HepG2 (cell line): ENCODE measurements at regions of chr1 and their contacts with region 1.

Region 1: GRCh38 chr1:17587989-17588685 is 48.6 kb downstream of the ARHGEF10L start:
- DNase-seq: peak; percentile 96
- ATAC-seq: peak; percentile 85
- H3K4me3 ChIP-seq: peak overlapping the region in 2 of 3 experiments; percentile 28 to 48; a peak in 4 of 6 replicates
- H3K27ac ChIP-seq: peak overlapping the region; percentile 97
- H3K4me1 ChIP-seq: peaks cover 100% of the 10 kb centered on the region
- H3K27me3 ChIP-seq: no peaks in the 10 kb centered on the region
- CTCF ChIP-seq: 0 out of 2 replicates have a peak, but pooled peaks have one; percentile 18
- EP300 ChIP-seq: peak in 1 of 2 experiments; percentile 80; a peak in 2 of 4 replicates
- POLR2A ChIP-seq: peak in 1 of 2 experiments; percentile 62; a peak in 3 of 4 replicates
- RAD21 ChIP-seq: peak; percentile 21; the same call in 1 of the 2 replicates

Region 2: GRCh38 chr1:17201201-17202021 is 386.7 kb before region 1 on chr1:
- CTCF ChIA-PET with region 1: no interaction called
- POLR2A ChIA-PET with region 1: no interaction called
- in situ Hi-C with region 1: no loop called
- intact Hi-C with region 1: no loop called
- DNase-seq: no peak
- ATAC-seq: no peak
- H3K4me3 ChIP-seq: no peak overlapping the region
- H3K27ac ChIP-seq: no peak overlapping the region
- H3K4me1 ChIP-seq: 0 out of 2 replicates have a peak, but pooled peaks cover 10% of the 10 kb centered on the region
- H3K27me3 ChIP-seq: peaks cover 0 to 5% of the 10 kb centered on the region in 2 experiments; a peak in 2 of 5 replicates
- CTCF ChIP-seq: no peak
- EP300 ChIP-seq: no peak
- POLR2A ChIP-seq: no peak
- RAD21 ChIP-seq: no peak

Region 3: DNA sequence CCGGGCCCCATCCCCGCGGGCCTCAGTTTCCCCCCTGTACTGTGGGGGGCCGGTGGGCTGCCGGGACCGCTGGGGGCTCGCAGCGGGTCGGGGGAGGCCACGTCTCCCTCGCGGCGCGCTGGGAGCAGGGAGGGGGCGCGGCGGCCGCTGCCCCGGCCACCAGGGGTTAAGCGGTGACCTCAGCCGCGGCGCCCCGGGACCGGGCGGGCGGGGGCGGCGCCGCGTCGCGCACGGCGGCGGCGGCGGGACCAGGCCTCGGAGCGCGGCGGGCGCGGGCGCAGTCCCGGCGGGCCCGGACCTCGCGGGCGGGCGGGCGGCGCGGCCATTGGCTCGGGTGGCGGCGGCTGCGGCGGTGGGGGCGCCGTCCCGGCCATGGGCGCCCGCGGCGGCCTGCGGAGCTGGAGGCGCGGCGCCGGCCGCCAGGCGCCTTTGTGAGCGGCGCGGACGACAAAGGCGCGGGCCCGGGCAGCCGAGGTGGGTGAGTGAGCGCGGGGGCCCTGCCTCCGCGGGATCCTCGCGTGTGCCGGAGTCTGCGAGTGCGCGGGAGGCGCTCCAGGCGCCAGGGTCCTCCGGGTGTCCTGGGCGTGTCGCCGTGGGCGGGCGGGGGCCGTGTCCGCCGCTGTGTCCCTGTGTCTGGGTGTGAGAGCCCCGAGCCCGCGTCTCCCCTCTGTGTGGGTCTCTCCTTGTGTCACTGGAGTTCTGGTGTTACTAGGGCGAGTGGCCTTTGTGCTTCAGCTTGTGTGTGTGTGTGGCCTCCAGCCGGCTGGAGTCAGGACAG is 48.5 kb before region 1 on chr1 and contains the start of gene ARHGEF10L:
- CTCF ChIA-PET with region 1: no interaction called
- POLR2A ChIA-PET with region 1: interaction called, 10 read pairs
- in situ Hi-C with region 1: no loop called
- intact Hi-C with region 1: loop called (anchors 2 kb)
- DNase-seq: no peak
- ATAC-seq: peak; percentile 42
- H3K4me3 ChIP-seq: peak within 1 kb of the TSS; percentile 75 to 86 (median 85)
- H3K27ac ChIP-seq: no peak within 1 kb of the TSS
- H3K4me1 ChIP-seq: peaks cover 49% of the 10 kb centered on the region
- H3K27me3 ChIP-seq: peaks cover 1 to 15% of the 10 kb centered on the region in 2 experiments; a peak in 2 of 5 replicates
- CTCF ChIP-seq: no peak
- EP300 ChIP-seq: no peak
- POLR2A ChIP-seq: no peak
- RAD21 ChIP-seq: no peak
- total RNA-seq, gene ARHGEF10L: 26.2 and 46.5 TPM in 2 replicates

Region 4: GRCh38 chr1:17574516-17574915 is 13.6 kb before region 1 on chr1:
- CTCF ChIA-PET with region 1: no interaction called
- POLR2A ChIA-PET with region 1: interaction called, 53 read pairs
- in situ Hi-C with region 1: no loop called
- intact Hi-C with region 1: loop called (anchors 1 kb)
- DNase-seq: no peak
- ATAC-seq: peak; percentile 59
- H3K4me3 ChIP-seq: peak overlapping the region in 1 of 3 experiments; percentile 44; a peak in 1 of 6 replicates
- H3K27ac ChIP-seq: no peak overlapping the region
- H3K4me1 ChIP-seq: peaks cover 80% of the 10 kb centered on the region
- H3K27me3 ChIP-seq: no peaks in the 10 kb centered on the region
- CTCF ChIP-seq: peak; percentile 68
- EP300 ChIP-seq: no peak
- POLR2A ChIP-seq: no peak
- RAD21 ChIP-seq: peak; percentile 48

Region 5: GRCh38 chr1:17612831-17613230 is 24.7 kb after region 1 on chr1:
- CTCF ChIA-PET with region 1: no interaction called
- POLR2A ChIA-PET with region 1: no interaction called
- in situ Hi-C with region 1: no loop called
- intact Hi-C with region 1: no loop called
- DNase-seq: no peak
- ATAC-seq: no peak
- H3K4me3 ChIP-seq: no peak overlapping the region
- H3K27ac ChIP-seq: no peak overlapping the region
- H3K4me1 ChIP-seq: no peaks in the 10 kb centered on the region
- H3K27me3 ChIP-seq: no peaks in the 10 kb centered on the region
- CTCF ChIP-seq: no peak
- EP300 ChIP-seq: no peak
- POLR2A ChIP-seq: no peak
- RAD21 ChIP-seq: no peak

Region 6: DNA sequence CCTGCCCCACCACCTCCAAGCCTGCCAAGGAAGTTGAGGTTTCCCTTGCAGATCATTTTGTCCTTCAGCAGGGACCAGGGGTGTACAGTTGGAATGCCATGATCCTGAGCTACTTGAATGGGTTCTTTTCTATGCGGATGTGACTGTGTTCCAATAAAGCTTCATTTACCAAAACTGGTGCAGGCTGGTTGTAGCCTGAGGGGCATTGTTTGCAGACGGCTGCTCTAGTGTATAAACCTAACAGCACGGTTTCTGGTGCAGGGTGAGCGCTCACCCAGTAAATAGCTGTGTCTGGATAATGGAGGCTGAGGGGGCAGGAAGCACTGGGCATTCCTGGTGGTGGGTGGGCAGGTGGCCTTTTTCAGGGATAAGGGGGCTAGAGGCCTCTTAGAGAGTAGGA is 94.3 kb after region 1 on chr1:
- CTCF ChIA-PET with region 1: no interaction called
- POLR2A ChIA-PET with region 1: no interaction called
- in situ Hi-C with region 1: no loop called
- intact Hi-C with region 1: no loop called
- DNase-seq: no peak
- ATAC-seq: no peak
- H3K4me3 ChIP-seq: no peak overlapping the region
- H3K27ac ChIP-seq: no peak overlapping the region
- H3K4me1 ChIP-seq: no peaks in the 10 kb centered on the region
- H3K27me3 ChIP-seq: no peaks in the 10 kb centered on the region
- CTCF ChIP-seq: no peak
- EP300 ChIP-seq: no peak
- POLR2A ChIP-seq: no peak
- RAD21 ChIP-seq: no peak